ENCODE measurements at regions of chr2 and their contacts with region 1.

Region 1: DNA sequence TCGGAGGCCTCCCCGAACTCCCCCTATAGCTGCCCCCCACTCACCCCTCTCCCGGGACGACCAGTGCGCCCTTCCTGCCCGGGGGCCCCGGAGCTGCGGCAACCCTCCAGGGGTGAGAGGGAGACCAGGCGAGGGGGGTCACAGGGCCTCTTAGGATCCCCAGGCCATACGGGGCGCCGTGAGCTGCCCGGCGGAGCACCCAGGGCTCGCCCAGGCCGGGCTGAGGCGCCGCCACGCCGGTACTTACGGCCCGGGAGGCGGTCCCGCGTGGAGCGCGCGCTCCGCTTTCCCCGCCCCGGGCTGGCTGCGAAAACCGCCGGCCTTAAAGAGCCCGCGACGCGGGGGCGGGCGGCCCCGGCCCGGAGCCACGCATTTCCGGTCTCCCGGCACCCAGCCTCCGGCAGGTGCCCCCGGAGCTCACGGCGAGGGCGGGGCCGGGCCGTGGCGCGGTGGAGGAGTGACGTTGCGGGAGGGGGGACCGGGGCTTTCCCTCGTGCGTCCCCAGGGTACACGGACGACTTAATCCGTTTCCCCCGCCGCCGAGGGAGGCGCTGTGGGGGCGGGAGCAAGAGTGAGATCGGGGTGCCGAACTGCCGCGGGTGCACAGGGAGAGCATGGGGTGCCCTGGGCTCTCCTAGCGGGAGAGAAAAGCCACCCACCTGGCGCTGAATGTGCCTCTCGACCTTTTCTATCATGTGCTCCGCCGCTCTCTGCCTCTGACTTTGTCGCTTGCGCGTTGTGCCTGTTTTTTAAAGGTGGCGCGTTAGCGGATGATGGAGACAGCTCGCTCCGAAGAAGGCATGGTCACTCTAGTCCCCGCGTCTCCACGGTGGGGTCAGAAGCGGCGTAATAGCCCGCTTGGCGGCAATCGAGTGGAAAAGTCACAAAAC is at the start of gene METTL21A:
- DNase-seq: peak; percentile 86
- ATAC-seq: peak; percentile 74
- H3K4me3 ChIP-seq: peak within 1 kb of the TSS; percentile 81
- H3K27ac ChIP-seq: peak within 1 kb of the TSS; percentile 96
- H3K4me1 ChIP-seq: peaks cover 22% of the 10 kb centered on the region
- H3K27me3 ChIP-seq: no peaks in the 10 kb centered on the region
- CTCF ChIP-seq: peak; percentile 50 to 74 (median 73)
- EP300 ChIP-seq: peak; percentile 51 to 58; a peak in 2 of 4 replicates
- POLR2A ChIP-seq: peak; percentile 89
- RAD21 ChIP-seq: peak; percentile 31; the same call in 1 of the 2 replicates
- polyA plus RNA-seq, gene METTL21A: 6.8 to 13.9 TPM

Region 2: DNA sequence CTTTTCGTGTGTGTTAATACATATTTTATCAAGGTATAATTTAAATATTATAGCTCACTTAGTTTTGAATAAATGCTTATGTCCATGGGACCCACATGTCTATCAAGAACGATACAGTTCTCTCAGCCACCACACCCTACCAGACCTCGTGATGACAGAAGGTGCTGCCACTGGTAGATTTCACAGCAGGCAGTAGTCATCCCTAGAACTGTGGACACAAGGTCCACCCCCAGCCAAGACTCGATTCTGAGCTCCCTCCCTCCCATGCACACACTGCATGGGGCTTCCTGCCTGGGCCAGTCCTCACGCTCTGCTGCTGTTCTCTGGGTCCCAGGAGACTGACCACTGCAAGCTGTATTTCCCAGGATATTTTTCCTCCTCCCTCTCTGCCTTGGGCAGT is 122.0 kb before region 1 on chr2:
- CTCF ChIA-PET with region 1: interaction called, 4 read pairs
- POLR2A ChIA-PET with region 1: interaction called, 10 read pairs
- RAD21 ChIA-PET with region 1: interaction called, 12 read pairs
- SMC1A ChIA-PET with region 1: interaction called, 6 read pairs
- in situ Hi-C with region 1: no loop called
- intact Hi-C with region 1: no loop called
- DNase-seq: no peak
- ATAC-seq: peak; percentile 90
- H3K4me3 ChIP-seq: no peak overlapping the region
- H3K27ac ChIP-seq: peak overlapping the region; percentile 3; the same call in 1 of the 2 replicates
- H3K4me1 ChIP-seq: peaks cover 33% of the 10 kb centered on the region
- H3K27me3 ChIP-seq: no peaks in the 10 kb centered on the region
- CTCF ChIP-seq: no peak
- EP300 ChIP-seq: no peak
- POLR2A ChIP-seq: no peak
- RAD21 ChIP-seq: no peak

Region 3: GRCh38 chr2:207692206-207693065 is 67.2 kb after region 1 on chr2:
- CTCF ChIA-PET with region 1: interaction called, 19 read pairs
- POLR2A ChIA-PET with region 1: no interaction called
- RAD21 ChIA-PET with region 1: interaction called, 4 read pairs
- SMC1A ChIA-PET with region 1: interaction called, 3 read pairs
- in situ Hi-C with region 1: no loop called
- intact Hi-C with region 1: no loop called
- DNase-seq: no peak
- ATAC-seq: peak; percentile 85
- H3K4me3 ChIP-seq: no peak overlapping the region
- H3K27ac ChIP-seq: no peak overlapping the region
- H3K4me1 ChIP-seq: no peaks in the 10 kb centered on the region
- H3K27me3 ChIP-seq: no peaks in the 10 kb centered on the region
- CTCF ChIP-seq: peak; percentile 40 to 63 (median 60)
- EP300 ChIP-seq: no peak
- POLR2A ChIP-seq: no peak
- RAD21 ChIP-seq: peak; percentile 51

Region 4: DNA sequence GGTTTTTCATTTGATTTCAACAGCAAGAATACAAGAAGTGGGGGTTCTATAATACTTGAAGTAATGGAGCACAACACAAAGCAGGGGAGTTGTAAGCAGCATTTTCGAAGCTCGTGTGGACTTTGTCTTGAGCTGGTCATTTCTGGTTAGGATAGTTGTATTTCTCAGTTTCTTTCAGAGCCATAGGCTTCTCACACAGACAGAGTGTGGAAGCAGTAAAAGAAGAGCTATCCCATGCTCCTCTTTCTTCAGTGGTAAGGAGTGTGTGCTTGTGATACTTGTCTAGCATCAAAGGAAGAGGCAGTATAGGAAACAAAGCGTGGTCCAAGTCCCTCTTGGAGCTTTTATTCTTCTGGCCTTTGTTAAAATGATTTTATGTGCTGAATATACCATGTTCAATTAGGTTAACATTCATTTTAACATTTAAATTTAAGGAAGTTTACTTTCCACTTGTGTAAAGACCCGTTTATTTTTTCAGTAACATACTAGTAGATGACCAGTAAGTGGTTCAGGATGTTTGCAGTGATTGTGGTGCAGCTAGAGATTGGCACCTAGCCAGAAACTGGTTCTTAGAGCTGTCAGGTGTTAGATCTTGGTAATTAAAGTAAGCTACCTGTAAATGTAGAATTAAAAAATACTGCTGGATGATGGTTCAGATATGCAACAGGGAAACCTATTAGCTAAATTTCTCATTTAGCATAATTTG is 100.8 kb after region 1 on chr2:
- CTCF ChIA-PET with region 1: interaction called, 49 read pairs
- POLR2A ChIA-PET with region 1: interaction called, 21 read pairs
- RAD21 ChIA-PET with region 1: interaction called, 31 read pairs
- SMC1A ChIA-PET with region 1: interaction called, 23 read pairs
- in situ Hi-C with region 1: no loop called
- intact Hi-C with region 1: loop called (anchors 5 kb)
- DNase-seq: no peak
- ATAC-seq: 0 out of 3 replicates have a peak, but pooled peaks have one; percentile 14
- H3K4me3 ChIP-seq: no peak overlapping the region
- H3K27ac ChIP-seq: no peak overlapping the region
- H3K4me1 ChIP-seq: peaks cover 3% of the 10 kb centered on the region; the same call in 1 of the 2 replicates
- H3K27me3 ChIP-seq: no peaks in the 10 kb centered on the region
- CTCF ChIP-seq: no peak
- EP300 ChIP-seq: no peak
- POLR2A ChIP-seq: no peak
- RAD21 ChIP-seq: no peak

Region 5: GRCh38 chr2:207769597-207770486 is 144.6 kb after region 1 on chr2 and contains the start of gene FZD5:
- CTCF ChIA-PET with region 1: interaction called, 14 read pairs
- POLR2A ChIA-PET with region 1: interaction called, 3 read pairs
- RAD21 ChIA-PET with region 1: interaction called, 8 read pairs
- SMC1A ChIA-PET with region 1: interaction called, 5 read pairs
- in situ Hi-C with region 1: no loop called
- intact Hi-C with region 1: no loop called
- DNase-seq: peak; percentile 68
- ATAC-seq: peak; percentile 92
- H3K4me3 ChIP-seq: peak within 1 kb of the TSS; percentile 87
- H3K27ac ChIP-seq: no peak within 1 kb of the TSS
- H3K4me1 ChIP-seq: peaks cover 17% of the 10 kb centered on the region
- H3K27me3 ChIP-seq: no peaks in the 10 kb centered on the region; a peak in 2 of 4 replicates
- CTCF ChIP-seq: peak; percentile 16 to 46 (median 44); a peak in 3 of 6 replicates
- EP300 ChIP-seq: 0 out of 4 replicates have a peak, but pooled peaks of 1 of the 2 experiments have one; percentile 35
- POLR2A ChIP-seq: peak; percentile 59
- RAD21 ChIP-seq: peak; percentile 28; the same call in 1 of the 2 replicates
- polyA plus RNA-seq, gene FZD5: 0.40 to 0.53 TPM

Region 6: DNA sequence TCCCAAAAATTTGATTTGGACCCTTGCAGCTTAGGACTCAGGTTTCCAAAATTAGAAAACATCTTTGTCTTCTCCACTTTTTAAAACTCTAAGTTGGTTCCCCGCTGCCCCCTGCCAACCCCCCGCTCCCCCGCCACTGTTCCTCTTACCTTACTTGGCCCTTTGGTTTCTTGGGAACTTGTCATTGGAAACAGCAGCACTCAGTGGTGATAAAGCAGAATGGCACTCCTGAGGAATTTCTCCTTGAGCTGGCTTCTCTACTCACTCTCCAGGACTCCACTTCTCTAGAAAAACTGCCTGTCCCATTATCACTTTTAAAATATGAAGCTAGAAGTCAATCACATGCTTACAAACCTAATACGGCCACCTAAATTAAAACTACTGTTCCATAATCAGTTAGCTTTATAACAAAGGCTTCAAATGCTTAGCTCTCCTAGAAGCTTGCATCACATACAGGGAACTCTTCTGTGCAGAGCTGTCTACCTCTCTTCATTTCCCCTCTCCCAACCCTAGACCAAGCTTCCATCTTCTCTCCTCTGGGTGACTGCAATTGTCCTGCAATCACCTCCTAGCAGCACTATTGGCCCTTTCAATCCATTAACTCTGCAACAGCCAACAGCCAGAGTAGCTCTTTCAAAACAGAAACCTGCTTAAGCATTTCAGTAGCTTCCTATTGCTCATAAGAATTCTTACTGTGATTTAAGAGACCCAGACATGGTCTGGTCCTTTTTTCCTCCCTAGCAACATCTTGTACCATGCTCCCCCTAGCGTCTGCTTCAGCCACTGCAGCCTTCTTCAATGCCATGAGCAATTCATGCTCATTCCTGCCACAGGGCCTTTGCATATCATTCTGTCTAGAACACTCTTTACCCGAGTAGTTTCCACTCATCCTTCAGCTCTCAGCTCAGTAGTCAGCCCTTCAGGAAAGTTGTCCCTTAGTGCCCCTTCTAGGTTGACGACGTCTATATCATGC is 415.2 kb after region 1 on chr2:
- CTCF ChIA-PET with region 1: interaction called, 20 read pairs
- POLR2A ChIA-PET with region 1: interaction called, 4 read pairs
- RAD21 ChIA-PET with region 1: interaction called, 7 read pairs
- SMC1A ChIA-PET with region 1: interaction called, 12 read pairs
- in situ Hi-C with region 1: no loop called
- intact Hi-C with region 1: no loop called
- DNase-seq: no peak
- ATAC-seq: peak; percentile 96
- H3K4me3 ChIP-seq: no peak overlapping the region
- H3K27ac ChIP-seq: no peak overlapping the region
- H3K4me1 ChIP-seq: no peaks in the 10 kb centered on the region
- H3K27me3 ChIP-seq: no peaks in the 10 kb centered on the region; a peak in 1 of 4 replicates
- CTCF ChIP-seq: peak; percentile 80 to 93 (median 93)
- EP300 ChIP-seq: no peak
- POLR2A ChIP-seq: no peak
- RAD21 ChIP-seq: peak; percentile 63

Region 7: GRCh38 chr2:208265801-208266552 is 640.7 kb after region 1 on chr2 and contains the start of gene PIKFYVE:
- CTCF ChIA-PET with region 1: interaction called, 3 read pairs
- POLR2A ChIA-PET with region 1: interaction called, 3 read pairs
- RAD21 ChIA-PET with region 1: no interaction called
- SMC1A ChIA-PET with region 1: interaction called, 3 read pairs
- in situ Hi-C with region 1: no loop called
- intact Hi-C with region 1: loop called (anchors 2 kb)
- DNase-seq: peak; percentile 91
- ATAC-seq: peak; percentile 92
- H3K4me3 ChIP-seq: peak within 1 kb of the TSS; percentile 86
- H3K27ac ChIP-seq: peak within 1 kb of the TSS; percentile 93
- H3K4me1 ChIP-seq: peaks cover 8% of the 10 kb centered on the region
- H3K27me3 ChIP-seq: no peaks in the 10 kb centered on the region
- CTCF ChIP-seq: peak in 1 of 3 experiments; percentile 11; a peak in 1 of 6 replicates
- EP300 ChIP-seq: peak; percentile 35 to 71; a peak in 3 of 4 replicates
- POLR2A ChIP-seq: peak; percentile 91
- RAD21 ChIP-seq: no peak; the same call in 1 of the 2 replicates
- polyA plus RNA-seq, gene PIKFYVE: 5.2 to 5.5 TPM

Measured in GM12878 (cell line).